CD4-positive, alpha-beta memory T cell (primary cell): ENCODE measurements at regions of chr10 and their contacts with region 1.

Region 1: DNA sequence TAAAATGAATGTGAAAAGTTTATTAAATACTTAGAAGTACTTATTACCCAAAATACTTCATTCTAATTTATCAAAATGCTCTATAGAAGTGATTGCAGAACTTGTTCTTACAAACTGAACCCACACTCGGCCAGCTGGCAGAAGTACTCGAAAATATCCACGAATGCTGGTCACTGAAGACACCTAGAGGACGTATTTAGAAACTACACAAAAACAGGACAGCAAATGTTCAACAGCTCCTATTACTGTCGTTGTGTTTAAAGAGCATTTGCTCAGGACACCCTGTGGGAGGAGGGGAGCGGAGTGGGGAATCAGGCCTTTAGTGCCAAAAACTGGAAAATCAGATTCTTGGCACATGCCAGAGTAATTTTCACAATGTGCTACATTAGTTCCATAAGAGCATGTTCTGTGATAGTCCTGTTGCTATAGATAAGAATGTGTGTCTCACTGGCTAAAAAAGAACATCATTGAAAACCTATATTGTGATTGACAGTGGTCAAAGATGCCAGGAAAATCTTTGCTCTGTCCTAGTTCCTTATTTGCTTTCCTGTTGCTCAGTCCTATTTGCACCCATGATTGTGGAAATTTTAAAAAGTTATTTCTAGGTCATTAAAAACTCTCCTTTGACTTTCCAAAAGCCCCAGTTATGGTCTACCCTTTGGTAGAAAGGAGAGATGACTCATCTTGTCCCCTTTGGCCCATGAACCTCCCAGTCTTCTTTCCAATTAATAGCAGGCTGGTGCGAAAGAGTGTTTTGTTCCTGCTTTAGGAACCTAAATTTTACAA is 49.0 kb upstream of the NRBF2 start:
- DNase-seq: peak; percentile 40 to 49 (median 48)
- H3K4me3 ChIP-seq: no peak overlapping the region
- H3K4me3 Mint-ChIP-seq: no peak overlapping the region
- H3K27ac ChIP-seq: no peak overlapping the region
- H3K27ac Mint-ChIP-seq: no peak overlapping the region
- H3K4me1 ChIP-seq: no peaks in the 10 kb centered on the region
- H3K4me1 Mint-ChIP-seq: peaks cover 0 to 1% (median 0%) of the 10 kb centered on the region in 4 donors
- H3K27me3 ChIP-seq: no peaks in the 10 kb centered on the region
- H3K27me3 Mint-ChIP-seq: peaks cover 8 to 12% of the 10 kb centered on the region in 2 donors

Region 2: DNA sequence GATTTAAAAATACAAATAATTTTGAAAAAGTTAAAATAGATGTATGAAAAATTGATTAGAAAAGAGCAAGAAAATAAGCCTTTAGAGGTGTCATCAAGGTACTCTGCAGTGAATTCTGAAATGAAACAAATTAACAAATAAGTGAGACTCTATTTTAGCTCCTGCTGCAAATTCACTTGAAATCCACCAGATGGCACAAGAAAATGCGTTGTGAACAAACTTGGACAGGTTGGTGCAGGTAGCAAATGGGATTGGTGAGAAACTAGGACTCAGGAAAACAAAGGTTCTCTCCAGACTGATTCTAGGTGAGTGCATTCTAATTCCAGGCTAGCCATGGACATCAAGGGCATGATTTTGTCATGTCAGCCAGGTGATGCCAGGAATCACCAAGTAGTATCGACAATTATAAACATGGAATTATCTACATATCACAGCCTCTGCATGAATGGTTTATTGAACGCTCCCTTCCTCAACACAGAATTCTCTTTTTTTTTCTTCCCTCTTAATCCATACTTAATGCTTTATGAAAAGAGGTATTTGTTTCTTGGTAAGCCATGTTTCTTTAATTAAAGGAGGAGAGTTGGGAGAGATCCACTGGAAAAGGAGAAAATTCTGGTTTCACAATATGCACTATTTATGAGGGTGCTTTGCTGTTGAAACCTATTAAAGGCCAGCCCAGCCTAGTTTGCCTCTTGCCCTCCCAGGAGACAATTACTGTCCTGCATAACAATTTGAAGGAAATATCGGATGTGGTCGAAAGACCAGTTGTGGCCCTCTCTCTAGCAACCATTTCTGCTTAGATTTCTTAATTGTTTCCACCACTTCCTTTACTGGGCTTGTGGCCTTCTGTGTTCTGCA is 591.9 kb before region 1 on chr10:
- CTCF ChIA-PET with region 1: interaction called, 16 read pairs
- POLR2A ChIA-PET with region 1: interaction called, 5 read pairs
- intact Hi-C with region 1: no loop called
- DNase-seq: peak in 4 of 5 donors; percentile 12 to 35 (median 23)
- H3K4me3 ChIP-seq: no peak overlapping the region
- H3K4me3 Mint-ChIP-seq: no peak overlapping the region
- H3K27ac ChIP-seq: no peak overlapping the region
- H3K27ac Mint-ChIP-seq: no peak overlapping the region
- H3K4me1 ChIP-seq: no peaks in the 10 kb centered on the region
- H3K4me1 Mint-ChIP-seq: peaks cover 0 to 2% (median 0%) of the 10 kb centered on the region in 4 donors
- H3K27me3 ChIP-seq: no peaks in the 10 kb centered on the region
- H3K27me3 Mint-ChIP-seq: peaks cover 1 to 2% of the 10 kb centered on the region in 2 donors

Region 3: GRCh38 chr10:62610649-62611229 is 473.4 kb before region 1 on chr10:
- CTCF ChIA-PET with region 1: interaction called, 10 read pairs
- POLR2A ChIA-PET with region 1: no interaction called
- intact Hi-C with region 1: loop called (anchors 1 kb)
- DNase-seq: peak; percentile 76 to 80 (median 78)
- H3K4me3 ChIP-seq: no peak overlapping the region
- H3K4me3 Mint-ChIP-seq: no peak overlapping the region
- H3K27ac ChIP-seq: no peak overlapping the region
- H3K27ac Mint-ChIP-seq: peak overlapping the region in 2 of 7 donors; percentile 46 to 78
- H3K4me1 ChIP-seq: peaks cover 4% of the 10 kb centered on the region
- H3K4me1 Mint-ChIP-seq: peaks cover 3 to 9% (median 4%) of the 10 kb centered on the region in 4 donors
- H3K27me3 ChIP-seq: no peaks in the 10 kb centered on the region
- H3K27me3 Mint-ChIP-seq: peaks cover 4 to 8% of the 10 kb centered on the region in 2 donors

Region 4: GRCh38 chr10:63256009-63256773 is 172.1 kb after region 1 on chr10:
- CTCF ChIA-PET with region 1: no interaction called
- POLR2A ChIA-PET with region 1: no interaction called
- intact Hi-C with region 1: no loop called
- DNase-seq: no peak
- H3K4me3 ChIP-seq: no peak overlapping the region
- H3K4me3 Mint-ChIP-seq: peak overlapping the region in 5 of 8 donors; percentile 7 to 58 (median 25)
- H3K27ac ChIP-seq: no peak overlapping the region
- H3K27ac Mint-ChIP-seq: peak overlapping the region; percentile 0 to 82 (median 44)
- H3K4me1 ChIP-seq: peaks cover 88% of the 10 kb centered on the region
- H3K4me1 Mint-ChIP-seq: peaks cover 56 to 95% (median 76%) of the 10 kb centered on the region in 4 donors
- H3K27me3 ChIP-seq: no peaks in the 10 kb centered on the region
- H3K27me3 Mint-ChIP-seq: no peaks in the 10 kb centered on the region